A673 (cell line): ENCODE measurements at regions of chr9 and their contacts with region 1.

Region 1: GRCh38 chr9:77163884-77164283 is 13.4 kb upstream of the VPS13A start:
- DNase-seq: peak; percentile 89
- H3K4me3 ChIP-seq: no peak overlapping the region
- H3K27ac ChIP-seq: no peak overlapping the region
- H3K4me1 ChIP-seq: peaks cover 11% of the 10 kb centered on the region
- H3K27me3 ChIP-seq: peaks cover 30% of the 10 kb centered on the region
- CTCF ChIP-seq: no peak

Region 2: DNA sequence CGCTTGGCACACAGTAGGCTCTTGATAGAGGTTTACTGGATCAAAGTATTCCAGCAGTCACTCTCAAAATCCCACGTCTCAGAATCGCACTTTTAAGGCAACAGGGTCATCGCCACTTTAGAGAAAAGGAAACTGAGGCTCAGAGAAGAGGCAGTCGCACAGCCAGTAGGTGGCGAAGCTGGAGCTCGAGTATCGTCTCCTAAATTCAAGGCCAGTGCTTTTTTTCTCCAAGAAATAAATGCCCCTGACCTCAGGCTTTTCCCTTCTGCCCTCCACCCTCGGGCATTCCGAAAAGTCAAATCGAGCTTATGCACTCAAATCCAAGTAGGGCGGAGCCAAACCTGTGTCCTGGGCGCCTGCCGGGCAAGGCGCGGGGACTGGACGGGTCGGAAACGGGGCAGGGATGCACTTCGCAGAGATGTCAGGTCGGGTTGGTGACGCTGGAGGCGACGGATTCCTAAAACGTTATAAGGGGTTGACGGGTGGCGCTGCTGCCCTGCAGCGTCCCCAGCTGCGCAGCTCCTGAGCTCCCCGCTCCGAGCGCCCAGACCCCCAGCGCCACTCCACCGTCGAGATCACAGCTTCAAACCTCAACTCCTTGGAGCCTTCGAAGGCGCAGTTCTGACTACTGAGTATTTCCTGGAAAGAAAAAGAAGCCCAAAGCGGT is 149.2 kb before region 1 on chr9:
- CTCF ChIA-PET with region 1: no interaction called
- POLR2A ChIA-PET with region 1: no interaction called
- intact Hi-C with region 1: no loop called
- DNase-seq: no peak
- H3K4me3 ChIP-seq: no peak overlapping the region
- H3K27ac ChIP-seq: no peak overlapping the region
- H3K4me1 ChIP-seq: peaks cover 13% of the 10 kb centered on the region
- H3K27me3 ChIP-seq: peaks cover 97% of the 10 kb centered on the region
- CTCF ChIP-seq: peak; percentile 43; the same call in 1 of the 2 replicates

Region 3: DNA sequence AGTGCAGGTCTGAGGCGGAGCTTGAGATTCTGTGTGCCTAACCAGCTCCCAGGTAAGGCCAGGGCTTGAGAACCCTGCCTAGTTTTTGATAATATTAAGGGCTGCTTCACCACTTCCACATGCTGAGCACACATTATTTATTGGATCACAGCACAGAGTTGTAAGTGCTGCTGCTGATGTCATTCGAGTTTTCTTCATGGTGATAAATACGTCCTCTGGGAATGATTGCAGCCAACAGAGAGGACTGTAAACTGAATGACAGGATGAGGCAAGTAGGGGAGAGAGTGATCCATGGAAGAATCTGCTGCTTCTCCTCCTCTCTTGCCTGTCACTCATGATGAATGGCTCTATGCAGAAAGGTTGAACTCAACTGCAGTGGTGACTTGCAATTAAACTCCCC is 64.5 kb before region 1 on chr9:
- CTCF ChIA-PET with region 1: no interaction called
- POLR2A ChIA-PET with region 1: no interaction called
- intact Hi-C with region 1: no loop called
- DNase-seq: peak; percentile 62
- H3K4me3 ChIP-seq: no peak overlapping the region
- H3K27ac ChIP-seq: no peak overlapping the region
- H3K4me1 ChIP-seq: peaks cover 21% of the 10 kb centered on the region
- H3K27me3 ChIP-seq: peaks cover 10% of the 10 kb centered on the region
- CTCF ChIP-seq: no peak

Region 4: GRCh38 chr9:77215874-77216273 is 52.0 kb after region 1 on chr9:
- CTCF ChIA-PET with region 1: interaction called, 3 read pairs
- POLR2A ChIA-PET with region 1: no interaction called
- intact Hi-C with region 1: loop called (anchors 5 kb)
- DNase-seq: peak; percentile 25
- H3K4me3 ChIP-seq: no peak overlapping the region
- H3K27ac ChIP-seq: no peak overlapping the region
- H3K4me1 ChIP-seq: no peaks in the 10 kb centered on the region
- H3K27me3 ChIP-seq: no peaks in the 10 kb centered on the region
- CTCF ChIP-seq: peak; percentile 52